Natural killer cell (primary cell): ENCODE measurements at regions of chr11 and their contacts with region 1.

Region 1: GRCh38 chr11:128039140-128040021 is 548.0 kb downstream of the ETS1 start:
- DNase-seq: peak; percentile 63 to 91
- ATAC-seq: peak; percentile 84 to 93 (median 92)
- H3K4me3 ChIP-seq: peak overlapping the region; percentile 7
- H3K4me3 Mint-ChIP-seq: peak overlapping the region; percentile 84
- H3K27ac ChIP-seq: peak overlapping the region; percentile 78
- H3K27ac Mint-ChIP-seq: peak overlapping the region; percentile 82 to 89
- H3K4me1 ChIP-seq: peaks cover 63% of the 10 kb centered on the region
- H3K4me1 Mint-ChIP-seq: peaks cover 34 to 49% of the 10 kb centered on the region in 2 donors
- H3K27me3 ChIP-seq: no peaks in the 10 kb centered on the region
- H3K27me3 Mint-ChIP-seq: no peaks in the 10 kb centered on the region
- CTCF ChIP-seq: peak; percentile 44

Region 2: GRCh38 chr11:127898422-127899365 is 140.7 kb before region 1 on chr11:
- intact Hi-C with region 1: no loop called
- DNase-seq: no peak
- ATAC-seq: no peak
- H3K4me3 ChIP-seq: no peak overlapping the region
- H3K4me3 Mint-ChIP-seq: no peak overlapping the region
- H3K27ac ChIP-seq: no peak overlapping the region
- H3K27ac Mint-ChIP-seq: no peak overlapping the region
- H3K4me1 ChIP-seq: no peaks in the 10 kb centered on the region
- H3K4me1 Mint-ChIP-seq: no peaks in the 10 kb centered on the region
- H3K27me3 ChIP-seq: no peaks in the 10 kb centered on the region
- H3K27me3 Mint-ChIP-seq: peaks cover 5 to 14% of the 10 kb centered on the region in 2 donors
- CTCF ChIP-seq: no peak

Region 3: DNA sequence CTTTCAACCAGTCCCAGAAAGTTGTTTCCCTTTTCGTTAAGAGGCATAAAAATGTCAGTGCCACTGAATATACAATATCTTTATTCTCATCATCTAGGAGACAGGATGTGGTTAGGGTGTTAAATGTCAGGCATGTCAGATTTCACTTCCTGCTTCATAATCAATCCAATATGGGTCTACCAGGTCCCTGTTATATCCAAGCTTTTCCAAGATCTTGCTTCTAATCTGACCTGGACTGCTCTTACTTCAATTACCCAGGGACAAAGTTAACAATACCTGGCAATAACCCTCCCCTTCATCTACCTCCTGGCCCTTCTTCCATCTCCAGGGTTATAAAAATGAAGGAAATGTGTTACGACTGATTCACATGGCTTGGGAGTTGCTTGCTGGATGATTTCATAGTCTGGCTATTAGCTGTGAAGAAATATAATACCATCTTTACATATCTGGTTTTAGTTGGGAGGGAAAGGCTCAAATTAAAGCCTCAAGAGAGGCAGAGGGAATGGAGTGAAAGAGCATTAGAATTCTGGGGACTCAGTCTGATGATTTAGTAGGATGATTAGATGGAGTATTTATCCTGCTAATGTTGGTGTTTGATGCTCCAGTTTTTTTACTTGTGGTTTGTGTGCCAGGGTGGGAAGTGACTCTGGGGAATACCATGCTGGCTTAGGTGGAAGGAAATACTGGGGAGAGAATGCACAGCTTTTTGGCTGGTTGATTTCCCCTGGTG is 13.7 kb after region 1 on chr11:
- intact Hi-C with region 1: loop called (anchors 2 kb)
- DNase-seq: peak in 1 of 2 donors; percentile 72
- ATAC-seq: peak in 2 of 3 donors; percentile 47 to 63
- H3K4me3 ChIP-seq: no peak overlapping the region
- H3K4me3 Mint-ChIP-seq: peak overlapping the region; percentile 65
- H3K27ac ChIP-seq: peak overlapping the region; percentile 73
- H3K27ac Mint-ChIP-seq: peak overlapping the region; percentile 73 to 92
- H3K4me1 ChIP-seq: peaks cover 25% of the 10 kb centered on the region
- H3K4me1 Mint-ChIP-seq: peaks cover 56 to 75% of the 10 kb centered on the region in 2 donors
- H3K27me3 ChIP-seq: no peaks in the 10 kb centered on the region
- H3K27me3 Mint-ChIP-seq: no peaks in the 10 kb centered on the region
- CTCF ChIP-seq: no peak

Region 4: GRCh38 chr11:128841461-128842072 is 802.2 kb after region 1 on chr11:
- intact Hi-C with region 1: loop called (anchors 2 kb)
- DNase-seq: peak; percentile 25 to 32
- ATAC-seq: peak; percentile 64 to 85 (median 76)
- H3K4me3 ChIP-seq: no peak overlapping the region
- H3K4me3 Mint-ChIP-seq: peak overlapping the region; percentile 55
- H3K27ac ChIP-seq: peak overlapping the region; percentile 73
- H3K27ac Mint-ChIP-seq: peak overlapping the region; percentile 82 to 90
- H3K4me1 ChIP-seq: peaks cover 37% of the 10 kb centered on the region
- H3K4me1 Mint-ChIP-seq: peaks cover 52 to 56% of the 10 kb centered on the region in 2 donors
- H3K27me3 ChIP-seq: no peaks in the 10 kb centered on the region
- H3K27me3 Mint-ChIP-seq: no peaks in the 10 kb centered on the region
- CTCF ChIP-seq: no peak